ENCODE measurements at regions of chr6 and their contacts with region 1.

Region 1: GRCh38 chr6:89352278-89353117 is at the start of gene UBE2J1:
- DNase-seq: peak; percentile 97
- total RNA-seq, gene UBE2J1: 18.0 TPM

Region 2: GRCh38 chr6:88963139-88964090 is 389.1 kb before region 1 on chr6 and contains the start of gene RNGTT:
- intact Hi-C with region 1: loop called (anchors 10 kb)
- DNase-seq: peak; percentile 99
- total RNA-seq, gene RNGTT: 7.9 TPM

Region 3: DNA sequence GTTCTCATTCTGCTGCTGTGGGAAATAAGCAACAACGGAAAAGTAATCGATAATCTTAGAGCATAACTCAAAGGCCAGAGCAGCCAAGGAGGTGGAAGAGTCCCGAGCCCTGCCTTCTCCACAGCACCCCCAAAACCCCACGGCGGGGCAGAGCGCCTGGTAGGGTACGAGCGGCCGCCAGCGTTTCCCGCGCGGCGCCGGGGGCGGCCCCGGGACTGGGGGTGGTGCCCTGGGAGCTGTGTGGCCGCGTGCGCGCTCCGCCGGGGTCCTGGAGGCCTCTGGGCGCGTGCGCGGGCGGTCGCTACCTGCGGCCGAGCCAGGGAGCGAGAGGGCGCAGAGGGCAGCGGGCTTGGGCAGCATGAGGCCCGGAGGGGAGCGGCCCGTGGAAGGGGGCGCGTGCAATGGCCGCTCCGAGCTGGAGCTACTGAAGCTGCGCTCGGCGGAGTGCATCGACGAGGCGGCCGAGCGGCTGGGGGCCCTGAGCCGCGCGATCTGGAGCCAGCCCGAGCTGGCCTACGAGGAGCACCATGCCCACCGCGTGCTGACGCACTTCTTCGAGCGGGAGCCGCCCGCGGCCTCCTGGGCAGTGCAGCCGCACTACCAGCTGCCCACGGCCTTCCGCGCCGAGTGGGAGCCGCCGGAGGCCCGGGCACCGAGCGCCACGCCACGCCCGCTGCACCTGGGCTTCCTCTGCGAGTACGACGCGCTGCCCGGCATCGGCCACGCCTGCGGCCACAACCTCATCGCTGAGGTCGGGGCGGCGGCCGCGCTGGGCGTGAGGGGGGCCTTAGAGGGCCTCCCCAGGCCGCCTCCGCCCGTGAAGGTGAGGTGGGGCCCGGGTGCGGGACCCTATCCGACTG is 206.5 kb before region 1 on chr6 and contains the start of gene PM20D2:
- intact Hi-C with region 1: loop called (anchors 10 kb)
- DNase-seq: peak; percentile 88
- total RNA-seq, gene PM20D2: 13.0 TPM

Region 4: GRCh38 chr6:89311853-89312531 is 40.5 kb before region 1 on chr6:
- intact Hi-C with region 1: loop called (anchors 2 kb)
- DNase-seq: peak; percentile 83